Tibial artery (tissue), 4 donors: ENCODE measurements at regions of chrX and their contacts with region 1.

Region 1: DNA sequence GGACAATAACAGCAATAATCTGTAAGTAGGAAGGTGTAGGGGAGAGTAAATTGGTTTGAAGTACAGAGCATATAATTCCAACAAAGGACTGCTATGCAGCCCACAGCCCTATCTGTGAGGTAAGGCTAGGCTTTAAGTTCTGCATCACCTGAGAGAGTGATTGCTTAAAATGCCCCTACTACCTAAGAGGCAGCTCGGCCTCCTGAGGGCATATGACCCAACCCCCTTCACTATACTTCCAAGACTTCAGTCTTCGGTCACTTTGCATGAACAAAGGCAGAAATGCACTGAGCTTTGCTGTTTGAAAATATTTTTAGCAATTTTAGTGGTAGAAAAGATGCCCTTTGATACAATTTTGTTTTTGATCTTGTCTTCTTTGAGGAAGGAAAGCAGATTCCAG is 4.9 kb upstream of the DDX3X start:
- DNase-seq: no peak
- H3K4me3 ChIP-seq: no peak overlapping the region
- H3K27ac ChIP-seq: no peak overlapping the region
- H3K4me1 ChIP-seq: no peaks in the 10 kb centered on the region
- H3K27me3 ChIP-seq: no peaks in the 10 kb centered on the region
- CTCF ChIP-seq: no peak

Region 2: GRCh38 chrX:40175511-40176350 is 1153.4 kb before region 1 on chrX:
- intact Hi-C with region 1: no loop called
- DNase-seq: peak; percentile 61 to 87
- H3K4me3 ChIP-seq: peak overlapping the region; percentile 77 to 81
- H3K27ac ChIP-seq: peak overlapping the region; percentile 91 to 97
- H3K4me1 ChIP-seq: peaks cover 0 to 30% (median 15%) of the 10 kb centered on the region in 4 donors
- H3K27me3 ChIP-seq: no peaks in the 10 kb centered on the region
- CTCF ChIP-seq: no peak

Region 3: GRCh38 chrX:41090568-41091238 is 238.4 kb before region 1 on chrX:
- intact Hi-C with region 1: loop called (anchors 5 kb)
- DNase-seq: no peak
- H3K4me3 ChIP-seq: peak overlapping the region in 1 of 2 donors; percentile 15
- H3K27ac ChIP-seq: no peak overlapping the region
- H3K4me1 ChIP-seq: peaks cover 0 to 57% (median 22%) of the 10 kb centered on the region in 4 donors
- H3K27me3 ChIP-seq: no peaks in the 10 kb centered on the region
- CTCF ChIP-seq: no peak